Right cardiac atrium (tissue), 5 donors: ENCODE measurements at regions of chr22 and their contacts with region 1.

Region 1: GRCh38 chr22:37544955-37545699 is 15.2 kb upstream of the CDC42EP1 start:
- DNase-seq: peak; percentile 70 to 90 (median 86)
- ATAC-seq: peak; percentile 37 to 58
- H3K4me3 ChIP-seq: no peak overlapping the region
- H3K27ac ChIP-seq: peak overlapping the region; percentile 66
- H3K4me1 ChIP-seq: peaks cover 7% of the 10 kb centered on the region
- H3K27me3 ChIP-seq: no peaks in the 10 kb centered on the region

Region 2: GRCh38 chr22:37472418-37473006 is 72.6 kb before region 1 on chr22:
- intact Hi-C with region 1: no loop called
- DNase-seq: peak in 1 of 3 donors; percentile 59
- ATAC-seq: peak in 1 of 2 donors; percentile 16
- H3K4me3 ChIP-seq: no peak overlapping the region
- H3K27ac ChIP-seq: no peak overlapping the region
- H3K4me1 ChIP-seq: no peaks in the 10 kb centered on the region
- H3K27me3 ChIP-seq: no peaks in the 10 kb centered on the region

Region 3: GRCh38 chr22:37566903-37567820 is 22.0 kb after region 1 on chr22:
- intact Hi-C with region 1: loop called in 1 of 4 experiments (anchors 2 kb)
- DNase-seq: peak; percentile 75 to 93 (median 93)
- ATAC-seq: peak; percentile 33 to 50
- H3K4me3 ChIP-seq: no peak overlapping the region
- H3K27ac ChIP-seq: peak overlapping the region; percentile 7
- H3K4me1 ChIP-seq: peaks cover 11% of the 10 kb centered on the region
- H3K27me3 ChIP-seq: no peaks in the 10 kb centered on the region

Region 4: DNA sequence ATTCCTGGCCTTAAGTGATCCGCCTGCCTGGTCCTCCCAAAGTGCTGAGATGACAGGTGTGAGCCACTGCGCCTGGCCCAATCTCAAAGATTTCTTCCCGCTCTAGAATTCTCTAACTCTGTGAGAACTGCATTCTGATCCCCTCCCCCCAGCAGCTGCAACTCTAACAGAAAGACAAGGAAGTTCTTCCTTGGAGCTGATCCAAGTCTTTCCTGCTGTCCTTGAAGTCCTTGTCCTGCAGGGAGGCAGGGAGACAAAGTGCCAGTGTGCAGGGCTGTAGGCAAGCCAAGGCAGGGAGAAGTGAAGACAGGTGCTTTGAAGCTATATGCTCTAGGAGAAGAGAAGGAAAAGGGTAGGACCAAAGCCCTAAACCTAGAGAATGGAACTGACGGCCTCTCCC is 54.0 kb after region 1 on chr22:
- intact Hi-C with region 1: loop called in 1 of 4 experiments (anchors 10 kb)
- DNase-seq: no peak
- ATAC-seq: no peak
- H3K4me3 ChIP-seq: no peak overlapping the region
- H3K27ac ChIP-seq: no peak overlapping the region
- H3K4me1 ChIP-seq: no peaks in the 10 kb centered on the region
- H3K27me3 ChIP-seq: no peaks in the 10 kb centered on the region